ENCODE measurements at regions of chr7 and their contacts with region 1.

Region 1: DNA sequence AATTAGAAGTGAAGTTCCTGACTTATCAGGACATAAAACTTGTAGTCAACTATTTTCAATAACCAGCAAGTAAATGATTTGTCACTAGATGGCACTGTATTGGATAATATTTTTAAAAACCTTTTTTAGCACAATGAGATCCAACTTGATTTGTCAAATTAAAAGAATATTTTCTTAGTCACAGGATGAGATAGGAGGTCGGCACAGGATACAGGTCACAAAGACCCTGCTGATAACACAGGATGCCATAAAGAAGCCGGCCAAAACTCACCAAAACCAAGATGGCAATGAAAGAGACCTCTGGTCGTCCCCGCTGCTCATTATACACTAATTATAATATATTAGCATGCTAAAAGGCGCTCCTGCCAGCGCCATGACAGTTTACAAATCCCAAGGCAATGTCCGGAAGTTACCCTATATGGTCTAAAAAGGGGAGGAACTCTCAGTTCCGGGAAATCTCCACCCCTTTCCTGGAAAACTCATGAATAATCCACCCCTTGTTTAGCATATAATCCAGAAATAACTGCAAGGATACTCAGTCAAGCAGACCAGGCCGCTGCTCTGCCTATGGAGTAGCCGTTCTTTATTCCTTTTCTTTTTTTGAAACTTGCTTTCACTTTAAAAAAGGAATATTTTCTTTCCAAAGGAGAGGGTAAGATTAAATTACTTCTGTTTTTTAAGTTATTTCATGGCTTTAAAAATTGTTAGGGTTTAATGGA is 255.7 kb upstream of the MKLN1 start:
- DNase-seq: peak; percentile 72
- H3K4me3 ChIP-seq: no peak overlapping the region
- H3K27ac ChIP-seq: no peak overlapping the region
- H3K4me1 ChIP-seq: peaks cover 23% of the 10 kb centered on the region
- H3K27me3 ChIP-seq: no peaks in the 10 kb centered on the region
- CTCF ChIP-seq: peak; percentile 42 to 49

Region 2: GRCh38 chr7:130896898-130897514 is 174.9 kb before region 1 on chr7:
- CTCF ChIA-PET with region 1: interaction called, 19 read pairs
- dilution Hi-C with region 1: no loop called
- in situ Hi-C with region 1: no loop called
- intact Hi-C with region 1: no loop called
- DNase-seq: no peak
- H3K4me3 ChIP-seq: no peak overlapping the region
- H3K27ac ChIP-seq: no peak overlapping the region
- H3K4me1 ChIP-seq: peaks cover 83% of the 10 kb centered on the region
- H3K27me3 ChIP-seq: no peaks in the 10 kb centered on the region
- CTCF ChIP-seq: peak; percentile 76 to 80

Region 3: DNA sequence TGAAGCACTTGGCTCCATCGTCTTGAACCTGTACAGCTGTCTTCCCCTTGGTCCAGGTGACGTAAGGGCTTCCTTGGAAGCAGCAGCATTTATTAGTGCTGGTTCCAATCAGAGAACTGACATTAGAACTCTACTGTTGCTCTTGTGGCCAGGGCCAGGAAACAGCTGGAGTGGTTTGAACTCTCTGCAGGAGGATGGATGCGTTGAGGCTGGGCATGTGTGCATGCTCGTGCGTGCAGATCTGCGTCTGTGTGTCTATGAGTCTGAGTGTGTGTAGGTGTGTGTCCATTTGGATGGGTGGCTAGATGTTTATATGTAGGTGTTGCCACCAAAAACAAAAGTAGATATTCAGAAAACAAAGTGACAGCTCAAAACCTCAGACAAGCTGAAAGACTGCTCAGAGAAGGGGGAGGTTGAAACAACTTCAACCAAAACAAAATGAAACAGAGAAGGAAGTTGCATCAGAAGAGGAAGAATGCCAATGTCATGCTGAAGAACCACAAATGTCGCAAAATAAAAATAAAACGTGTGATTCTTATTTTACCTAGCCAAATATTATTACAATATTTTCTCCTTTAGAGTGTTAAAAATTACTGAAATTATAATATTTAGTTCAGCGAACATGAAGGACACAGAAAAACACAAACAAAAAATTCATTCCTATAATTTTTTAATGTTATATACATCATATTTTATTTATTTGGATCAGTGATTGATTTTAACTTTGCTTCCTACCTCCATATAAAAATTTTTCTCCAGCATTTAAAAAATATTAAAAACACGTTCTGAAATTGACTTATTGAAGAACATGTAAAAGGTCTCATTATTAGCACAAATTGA is 159.7 kb after region 1 on chr7:
- CTCF ChIA-PET with region 1: no interaction called
- dilution Hi-C with region 1: no loop called
- in situ Hi-C with region 1: no loop called
- intact Hi-C with region 1: loop called (anchors 5 kb)
- DNase-seq: no peak
- H3K4me3 ChIP-seq: no peak overlapping the region
- H3K27ac ChIP-seq: no peak overlapping the region
- H3K4me1 ChIP-seq: peaks cover 12% of the 10 kb centered on the region
- H3K27me3 ChIP-seq: no peaks in the 10 kb centered on the region
- CTCF ChIP-seq: no peak

Region 4: DNA sequence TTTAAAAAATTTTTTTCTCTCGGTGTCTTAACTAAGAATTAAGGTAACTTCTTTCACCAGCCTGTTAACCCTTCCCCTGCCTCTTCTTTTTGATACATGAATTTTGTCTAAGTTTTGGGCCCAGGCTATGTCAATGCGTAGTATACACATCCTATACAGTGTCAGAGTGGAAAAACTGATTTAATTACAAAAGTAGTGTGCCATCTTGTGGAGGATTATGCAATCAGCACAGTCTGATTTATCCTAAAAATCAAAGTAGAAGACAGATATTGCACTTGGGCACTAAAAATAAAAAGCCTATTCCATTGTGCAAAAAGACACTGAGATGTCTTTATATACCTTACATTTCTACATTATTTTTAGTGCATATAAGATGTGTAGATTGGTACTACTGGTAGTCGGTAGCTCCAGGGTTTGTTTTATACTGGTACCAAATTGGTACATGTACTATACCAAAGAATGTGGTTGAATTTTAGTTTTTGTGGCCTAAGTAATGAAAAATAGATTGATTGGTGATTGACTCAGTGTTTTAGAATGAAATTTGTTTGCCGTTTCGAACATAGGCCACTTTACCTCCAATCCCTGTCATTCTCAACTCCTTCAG is 352.4 kb after region 1 on chr7:
- CTCF ChIA-PET with region 1: no interaction called
- dilution Hi-C with region 1: no loop called
- in situ Hi-C with region 1: no loop called
- intact Hi-C with region 1: loop called (anchors 1 kb)
- DNase-seq: peak; percentile 11
- H3K4me3 ChIP-seq: no peak overlapping the region
- H3K27ac ChIP-seq: no peak overlapping the region
- H3K4me1 ChIP-seq: no peaks in the 10 kb centered on the region
- H3K27me3 ChIP-seq: no peaks in the 10 kb centered on the region
- CTCF ChIP-seq: peak; percentile 32 to 47

Region 5: DNA sequence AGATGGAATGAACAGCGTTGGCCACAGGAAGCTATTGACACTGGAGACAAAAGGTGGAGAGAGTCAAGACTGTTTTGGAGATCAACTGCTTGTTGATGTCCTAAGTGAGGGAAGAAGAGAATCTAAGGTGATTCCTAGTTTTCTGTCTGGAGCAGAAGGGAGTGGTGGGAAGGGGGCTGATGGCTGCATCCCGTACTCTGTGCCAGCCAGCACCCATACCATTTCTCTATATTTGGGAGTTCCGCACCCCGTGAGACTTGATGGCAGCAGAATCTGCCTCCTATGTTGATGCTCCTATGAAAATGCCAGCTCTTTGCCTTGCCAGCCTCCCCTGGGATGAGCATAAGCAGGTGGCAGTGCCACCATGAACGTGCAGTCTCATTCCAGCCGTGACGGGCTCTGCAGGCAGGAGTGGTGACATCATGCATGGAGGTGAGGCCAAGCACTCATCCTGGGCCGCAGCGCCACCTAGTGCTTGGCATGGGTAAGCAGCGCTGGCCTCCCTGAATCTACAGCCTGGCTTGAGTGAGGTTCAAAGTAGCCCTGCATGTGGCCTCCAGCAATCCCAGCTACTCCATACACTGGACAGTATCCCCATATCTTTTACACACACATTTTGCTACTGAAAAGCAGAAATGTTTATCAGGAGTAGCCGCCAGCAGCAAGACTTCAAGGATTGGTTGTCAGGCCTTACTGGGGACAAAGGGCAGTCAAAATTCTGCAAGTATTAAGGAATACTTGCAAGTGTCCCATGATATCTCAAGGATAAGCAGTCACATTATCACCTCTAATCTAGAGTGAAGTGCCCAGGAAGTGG is 441.5 kb after region 1 on chr7:
- CTCF ChIA-PET with region 1: no interaction called
- dilution Hi-C with region 1: no loop called
- in situ Hi-C with region 1: no loop called
- intact Hi-C with region 1: loop called (anchors 1 kb)
- DNase-seq: peak; percentile 64
- H3K4me3 ChIP-seq: no peak overlapping the region
- H3K27ac ChIP-seq: no peak overlapping the region
- H3K4me1 ChIP-seq: no peaks in the 10 kb centered on the region
- H3K27me3 ChIP-seq: no peaks in the 10 kb centered on the region
- CTCF ChIP-seq: peak; percentile 97 to 99